PC-3 (cell line): ENCODE measurements at regions of chr6 and their contacts with region 1.

Region 1: GRCh38 chr6:156686995-156687788 is 90.0 kb upstream of the ARID1B start:
- DNase-seq: peak; percentile 73
- ATAC-seq: peak; percentile 87
- H3K4me3 ChIP-seq: peak overlapping the region; percentile 91
- H3K27ac ChIP-seq: peak overlapping the region; percentile 90
- H3K4me1 ChIP-seq: peaks cover 16% of the 10 kb centered on the region
- H3K27me3 ChIP-seq: no peaks in the 10 kb centered on the region
- CTCF ChIP-seq: no peak

Region 2: GRCh38 chr6:156564127-156564806 is 122.9 kb before region 1 on chr6:
- CTCF ChIA-PET with region 1: interaction called, 6 read pairs
- POLR2A ChIA-PET with region 1: no interaction called
- intact Hi-C with region 1: loop called (anchors 5 kb)
- DNase-seq: peak; percentile 66
- ATAC-seq: peak; percentile 93
- H3K4me3 ChIP-seq: no peak overlapping the region
- H3K27ac ChIP-seq: no peak overlapping the region
- H3K4me1 ChIP-seq: no peaks in the 10 kb centered on the region
- H3K27me3 ChIP-seq: no peaks in the 10 kb centered on the region
- CTCF ChIP-seq: peak; percentile 82

Region 3: DNA sequence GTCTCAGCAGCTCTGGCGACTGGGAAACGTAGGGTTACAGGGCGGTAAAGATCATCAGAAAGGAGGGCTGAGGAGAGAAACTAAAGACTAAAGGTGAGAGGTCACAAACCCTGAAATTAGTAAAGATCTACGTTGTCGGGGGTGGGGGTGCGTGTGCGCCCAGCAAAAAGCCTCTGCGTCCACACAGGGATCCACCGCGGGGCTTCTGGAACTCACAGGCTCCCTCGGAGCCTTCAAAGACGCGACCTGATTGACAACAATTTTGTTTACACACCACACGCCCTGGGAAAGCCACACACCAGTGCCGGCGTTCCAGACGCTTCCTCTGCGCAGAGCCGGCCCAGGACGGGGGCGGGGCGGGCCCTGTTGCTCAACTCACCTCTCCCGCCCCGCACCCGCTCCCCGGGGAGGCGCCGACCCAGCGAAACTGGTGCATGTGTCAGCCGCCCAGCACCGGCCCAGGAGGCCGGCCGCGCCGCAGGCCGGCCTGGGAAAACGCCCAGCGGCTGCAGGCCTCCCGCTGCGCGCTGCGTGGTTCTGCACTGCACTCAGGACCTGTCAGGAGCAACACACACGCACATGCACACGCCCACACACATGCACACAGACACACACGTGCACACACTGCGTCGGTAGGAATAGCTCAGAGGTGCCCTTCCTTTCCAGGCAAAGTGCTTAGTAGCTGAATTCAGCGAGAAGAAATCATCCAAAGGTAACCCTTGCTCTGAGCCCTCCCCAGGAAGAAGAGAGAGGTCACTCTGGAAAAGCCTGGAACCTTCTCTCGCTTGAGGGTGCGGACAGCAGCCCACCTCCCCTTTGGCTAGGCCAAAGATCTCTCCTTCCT is 32.8 kb after region 1 on chr6:
- CTCF ChIA-PET with region 1: no interaction called
- POLR2A ChIA-PET with region 1: no interaction called
- intact Hi-C with region 1: loop called (anchors 2 kb)
- DNase-seq: peak; percentile 91
- ATAC-seq: peak; percentile 99
- H3K4me3 ChIP-seq: peak overlapping the region; percentile 48
- H3K27ac ChIP-seq: peak overlapping the region; percentile 60
- H3K4me1 ChIP-seq: peaks cover 18% of the 10 kb centered on the region
- H3K27me3 ChIP-seq: no peaks in the 10 kb centered on the region
- CTCF ChIP-seq: no peak

Region 4: GRCh38 chr6:157021344-157021992 is 334.3 kb after region 1 on chr6:
- CTCF ChIA-PET with region 1: interaction called, 3 read pairs
- POLR2A ChIA-PET with region 1: no interaction called
- intact Hi-C with region 1: loop called (anchors 2 kb)
- DNase-seq: peak; percentile 80
- ATAC-seq: peak; percentile 84
- H3K4me3 ChIP-seq: peak overlapping the region; percentile 92
- H3K27ac ChIP-seq: peak overlapping the region; percentile 90
- H3K4me1 ChIP-seq: peaks cover 8% of the 10 kb centered on the region
- H3K27me3 ChIP-seq: no peaks in the 10 kb centered on the region
- CTCF ChIP-seq: peak; percentile 40; the same call in 1 of the 2 replicates